Heart right ventricle (tissue), 16 donors: ENCODE measurements at regions of chr1 and their contacts with region 1.

Region 1: GRCh38 chr1:52002038-52002917 is 11.8 kb upstream of the RAB3B start:
- DNase-seq: peak in 1 of 2 donors; percentile 80
- ATAC-seq: peak; percentile 67 to 92 (median 86)
- H3K4me3 ChIP-seq: no peak overlapping the region
- H3K27ac ChIP-seq: no peak overlapping the region
- H3K4me1 ChIP-seq: no peaks in the 10 kb centered on the region
- H3K27me3 ChIP-seq: peaks cover 0 to 46% (median 35%) of the 10 kb centered on the region in 7 donors
- CTCF ChIP-seq: peak; percentile 59 to 97 (median 89)

Region 2: DNA sequence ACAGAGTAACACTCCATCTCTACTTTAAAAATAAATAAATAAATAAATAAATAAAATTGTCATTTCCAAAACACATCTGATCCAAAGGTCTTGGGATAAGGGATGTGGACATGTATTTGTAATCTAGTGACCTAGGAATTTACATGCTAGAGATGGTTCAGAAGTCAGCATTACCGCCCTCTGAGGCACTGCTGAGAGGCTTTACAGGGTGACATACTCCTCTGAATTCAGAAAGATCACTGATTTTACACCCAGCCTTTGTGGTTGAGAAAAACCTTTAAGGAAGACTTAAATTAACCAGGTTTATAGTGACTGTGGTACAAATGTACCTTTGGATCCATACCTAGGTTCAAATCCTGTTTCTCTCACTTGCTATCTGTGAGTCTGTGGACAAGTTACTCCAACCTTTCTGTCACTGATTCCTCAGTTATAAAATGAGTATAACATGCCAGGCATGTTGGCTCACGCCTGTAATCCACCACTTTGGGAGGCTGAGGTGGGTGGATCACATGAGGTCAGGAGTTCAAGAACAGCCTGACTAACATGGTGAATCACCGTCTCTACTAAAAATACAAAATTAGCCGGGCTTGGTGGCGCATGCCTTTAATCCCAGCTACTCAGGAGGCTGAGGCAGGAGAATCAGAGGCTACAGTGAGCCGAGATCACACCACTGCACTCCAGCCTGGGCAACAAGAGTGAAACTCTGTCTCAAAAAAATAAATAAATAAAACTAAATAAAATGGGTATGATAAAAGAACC is 365.3 kb before region 1 on chr1:
- intact Hi-C with region 1: loop called in 1 of 10 experiments (anchors 10 kb)
- DNase-seq: no peak
- ATAC-seq: peak in 6 of 8 donors; percentile 30 to 78 (median 47)
- H3K4me3 ChIP-seq: no peak overlapping the region
- H3K27ac ChIP-seq: peak overlapping the region in 4 of 10 donors; percentile 9 to 57 (median 24)
- H3K4me1 ChIP-seq: peaks cover 2 to 44% (median 23%) of the 10 kb centered on the region in 9 donors
- H3K27me3 ChIP-seq: no peaks in the 10 kb centered on the region
- CTCF ChIP-seq: no peak

Region 3: GRCh38 chr1:51897699-51898031 is 104.6 kb before region 1 on chr1:
- intact Hi-C with region 1: loop called (anchors 1 to 5 kb)
- DNase-seq: no peak
- ATAC-seq: no peak
- H3K4me3 ChIP-seq: no peak overlapping the region
- H3K27ac ChIP-seq: no peak overlapping the region
- H3K4me1 ChIP-seq: peaks cover 0 to 4% (median 0%) of the 10 kb centered on the region in 9 donors
- H3K27me3 ChIP-seq: peaks cover 0 to 91% (median 70%) of the 10 kb centered on the region in 7 donors
- CTCF ChIP-seq: no peak